ENCODE measurements at regions of chr6 and their contacts with region 1.

Region 1: GRCh38 chr6:32971581-32972352 is 3.4 kb downstream of the BRD2 start:
- DNase-seq: peak; percentile 100
- H3K4me3 ChIP-seq: peak overlapping the region; percentile 93
- H3K27ac ChIP-seq: peak overlapping the region; percentile 99
- H3K4me1 ChIP-seq: peaks cover 27% of the 10 kb centered on the region
- CTCF ChIP-seq: no peak

Region 2: GRCh38 chr6:32843979-32844838 is 127.6 kb before region 1 on chr6 and contains the start of gene PSMB8:
- CTCF ChIA-PET with region 1: interaction called, 4 read pairs
- POLR2A ChIA-PET with region 1: interaction called, 6 read pairs
- intact Hi-C with region 1: loop called (anchors 5 kb)
- DNase-seq: peak; percentile 98
- H3K4me3 ChIP-seq: peak within 1 kb of the TSS; percentile 77
- H3K27ac ChIP-seq: peak within 1 kb of the TSS; percentile 88
- H3K4me1 ChIP-seq: peaks cover 55% of the 10 kb centered on the region
- CTCF ChIP-seq: 0 out of 2 replicates have a peak, but pooled peaks have one; percentile 9
- total RNA-seq, gene PSMB8: 142 and 164 TPM in 2 replicates

Region 3: DNA sequence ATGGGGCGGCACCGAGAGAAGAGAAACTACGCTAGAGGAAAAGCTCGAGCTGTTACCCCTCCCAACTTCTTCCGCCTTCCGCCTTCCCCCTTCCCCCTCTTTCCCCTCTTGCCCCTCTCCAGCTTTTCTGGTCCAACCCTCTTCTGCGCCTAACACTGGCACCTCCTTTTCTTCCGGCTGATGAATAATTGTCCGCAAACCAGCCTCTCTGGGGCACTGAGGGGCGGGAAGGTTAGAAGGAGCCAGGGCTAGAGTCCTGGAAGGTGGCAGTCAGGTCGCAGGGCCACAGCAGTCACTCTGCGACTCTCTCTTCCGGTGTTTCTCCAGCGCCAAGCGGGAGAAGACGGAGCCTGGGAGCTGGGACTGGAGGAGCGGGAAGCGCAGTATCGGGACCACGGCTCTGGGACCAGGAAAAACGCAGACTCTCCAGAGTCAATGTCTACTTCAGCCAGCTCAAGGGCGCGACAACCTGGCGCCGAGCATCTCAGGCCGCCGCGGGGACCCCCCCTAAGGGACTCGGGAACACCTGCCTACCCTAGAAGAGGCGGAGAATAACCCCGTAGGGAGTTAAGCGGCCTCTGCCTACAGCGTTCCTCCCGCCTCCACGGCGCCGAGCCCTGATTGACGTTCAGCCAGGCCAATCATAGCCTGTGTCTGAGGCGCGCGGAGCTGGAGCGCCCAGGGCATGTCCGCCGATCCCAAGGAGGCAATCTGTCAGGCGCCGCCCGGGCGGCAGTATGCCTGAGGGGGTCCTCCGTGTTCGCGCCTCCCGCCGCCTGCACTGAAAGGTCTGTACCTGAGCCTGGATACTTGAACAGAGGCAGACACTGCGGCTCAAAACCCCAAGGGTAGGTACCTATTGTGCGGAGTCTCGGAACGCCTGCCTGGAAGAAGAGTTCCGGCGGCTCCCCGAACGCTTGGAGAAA is 77.4 kb before region 1 on chr6:
- CTCF ChIA-PET with region 1: no interaction called
- POLR2A ChIA-PET with region 1: interaction called, 17 read pairs
- intact Hi-C with region 1: no loop called
- DNase-seq: peak; percentile 97
- H3K4me3 ChIP-seq: peak overlapping the region; percentile 97
- H3K27ac ChIP-seq: peak overlapping the region; percentile 79
- H3K4me1 ChIP-seq: peaks cover 57% of the 10 kb centered on the region
- CTCF ChIP-seq: no peak

Region 4: GRCh38 chr6:32947552-32948465 is 24.0 kb before region 1 on chr6:
- CTCF ChIA-PET with region 1: interaction called, 23 read pairs
- POLR2A ChIA-PET with region 1: interaction called, 203 read pairs
- intact Hi-C with region 1: loop called (anchors 1 kb)
- DNase-seq: peak; percentile 73
- H3K4me3 ChIP-seq: peak overlapping the region; percentile 75
- H3K27ac ChIP-seq: peak overlapping the region; percentile 99
- H3K4me1 ChIP-seq: peaks cover 84% of the 10 kb centered on the region
- CTCF ChIP-seq: peak; percentile 97

Region 5: GRCh38 chr6:32984605-32985389 is 13.0 kb after region 1 on chr6:
- CTCF ChIA-PET with region 1: interaction called, 12 read pairs
- POLR2A ChIA-PET with region 1: interaction called, 47 read pairs
- intact Hi-C with region 1: no loop called
- DNase-seq: peak; percentile 93
- H3K4me3 ChIP-seq: no peak overlapping the region
- H3K27ac ChIP-seq: peak overlapping the region; percentile 55
- H3K4me1 ChIP-seq: peaks cover 40% of the 10 kb centered on the region
- CTCF ChIP-seq: peak; percentile 97

Measured in OCI-LY7 (cell line).